HepG2 (cell line): ENCODE measurements at regions of chr6 and their contacts with region 1.

Region 1: DNA sequence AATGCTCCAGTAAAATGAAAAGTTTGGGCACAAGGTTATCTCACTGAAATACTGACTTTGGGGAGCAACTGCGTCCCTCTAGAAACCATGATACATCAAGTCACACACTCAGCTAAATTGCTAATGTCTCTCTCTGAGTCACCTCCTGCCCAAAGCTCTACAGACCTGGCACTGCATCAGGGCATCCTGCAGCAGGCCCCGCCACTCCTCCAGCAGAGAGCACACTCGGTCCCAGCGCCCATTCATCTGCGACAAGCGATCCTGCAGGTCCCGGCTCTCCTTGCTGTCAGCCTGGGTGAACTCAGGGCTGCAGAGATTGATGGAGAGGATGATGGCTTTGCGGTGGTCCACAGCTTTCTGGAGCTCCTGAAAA is 329.0 kb downstream of the ESR1 start:
- DNase-seq: no peak
- ATAC-seq: peak; percentile 91
- H3K4me3 ChIP-seq: no peak overlapping the region
- H3K27ac ChIP-seq: peak overlapping the region; percentile 8
- H3K4me1 ChIP-seq: peaks cover 19% of the 10 kb centered on the region
- H3K27me3 ChIP-seq: no peaks in the 10 kb centered on the region
- CTCF ChIP-seq: no peak
- EP300 ChIP-seq: no peak
- POLR2A ChIP-seq: no peak
- RAD21 ChIP-seq: no peak

Region 2: GRCh38 chr6:152170705-152171667 is 34.5 kb after region 1 on chr6:
- CTCF ChIA-PET with region 1: no interaction called
- POLR2A ChIA-PET with region 1: interaction called, 5 read pairs
- in situ Hi-C with region 1: no loop called
- intact Hi-C with region 1: loop called (anchors 1 kb)
- DNase-seq: peak; percentile 94
- ATAC-seq: peak; percentile 99
- H3K4me3 ChIP-seq: peak overlapping the region; percentile 46 to 57 (median 49)
- H3K27ac ChIP-seq: peak overlapping the region; percentile 86
- H3K4me1 ChIP-seq: peaks cover 24% of the 10 kb centered on the region
- H3K27me3 ChIP-seq: no peaks in the 10 kb centered on the region
- CTCF ChIP-seq: no peak
- EP300 ChIP-seq: peak in 1 of 2 experiments; percentile 76; a peak in 2 of 4 replicates
- POLR2A ChIP-seq: peak; percentile 28 to 63; a peak in 2 of 4 replicates
- RAD21 ChIP-seq: no peak